Activated CD4-positive, alpha-beta memory T cell treated with anti-CD3 and anti-CD28 coated beads for 36 hours (primary cell): ENCODE measurements at regions of chr16 and their contacts with region 1.

Region 1: DNA sequence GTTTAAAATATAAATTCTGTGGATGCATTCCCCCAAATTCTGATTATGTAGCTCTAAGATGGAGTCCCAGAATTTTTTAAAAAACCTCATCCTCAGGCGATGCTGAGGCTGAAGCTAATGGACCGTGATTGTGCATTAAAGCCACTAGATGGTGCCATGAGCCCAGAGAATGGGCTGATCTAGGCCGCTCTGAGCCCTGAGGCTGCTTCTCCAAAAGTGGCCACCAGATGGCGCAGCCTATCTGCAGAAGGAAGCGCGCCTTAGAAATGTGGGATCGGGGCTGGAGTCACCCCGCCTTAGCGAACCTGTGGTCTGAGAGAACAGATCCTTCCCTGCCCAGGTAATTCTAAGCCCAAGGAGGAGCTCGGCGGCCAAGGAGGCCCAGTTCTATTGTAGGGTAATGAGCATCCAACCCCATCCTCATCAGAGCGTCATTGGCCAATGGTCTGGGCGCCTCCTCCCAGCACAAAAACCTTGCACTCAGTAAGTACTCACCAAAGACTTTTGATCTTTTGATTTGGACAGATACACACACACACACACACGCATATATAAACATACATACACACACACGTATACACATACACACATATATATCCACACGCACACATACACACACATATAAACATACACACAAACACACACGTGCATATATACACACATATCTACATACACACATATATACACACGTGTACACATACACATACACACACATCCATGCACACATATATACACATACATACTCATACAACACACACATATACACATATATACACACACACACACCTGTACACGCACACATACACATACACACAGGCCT is 13.7 kb upstream of the MMP2 start:
- DNase-seq: peak; percentile 86
- H3K4me3 Mint-ChIP-seq: no peak overlapping the region
- H3K27ac Mint-ChIP-seq: no peak overlapping the region
- H3K4me1 Mint-ChIP-seq: no peaks in the 10 kb centered on the region
- H3K27me3 Mint-ChIP-seq: peaks cover 3% of the 10 kb centered on the region

Region 2: GRCh38 chr16:55444754-55445485 is 20.4 kb before region 1 on chr16:
- CTCF ChIA-PET with region 1: interaction called, 15 read pairs
- POLR2A ChIA-PET with region 1: no interaction called
- intact Hi-C with region 1: no loop called
- DNase-seq: no peak
- H3K4me3 Mint-ChIP-seq: no peak overlapping the region
- H3K27ac Mint-ChIP-seq: no peak overlapping the region
- H3K4me1 Mint-ChIP-seq: no peaks in the 10 kb centered on the region
- H3K27me3 Mint-ChIP-seq: peaks cover 7% of the 10 kb centered on the region

Region 3: DNA sequence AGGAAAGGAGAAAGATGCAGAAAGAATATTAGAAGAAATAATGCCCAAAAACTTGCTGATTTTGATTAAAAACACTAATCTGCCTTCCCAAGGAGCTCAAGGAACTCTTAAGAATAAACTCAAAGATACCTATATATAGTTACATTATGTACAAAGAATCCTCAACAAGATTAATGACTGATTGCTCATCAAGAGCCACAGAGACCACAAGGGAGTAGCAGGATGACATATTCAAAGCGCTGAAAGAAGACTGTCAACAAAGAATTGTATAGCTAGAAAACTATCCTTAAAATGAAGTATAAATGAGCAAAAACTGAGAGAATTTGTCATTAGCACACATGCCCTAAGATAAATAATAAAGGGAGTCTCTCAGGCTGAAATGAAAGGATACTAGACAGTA is 49.8 kb after region 1 on chr16:
- CTCF ChIA-PET with region 1: interaction called, 10 read pairs
- POLR2A ChIA-PET with region 1: no interaction called
- intact Hi-C with region 1: no loop called
- DNase-seq: no peak
- H3K4me3 Mint-ChIP-seq: no peak overlapping the region
- H3K27ac Mint-ChIP-seq: no peak overlapping the region
- H3K4me1 Mint-ChIP-seq: no peaks in the 10 kb centered on the region
- H3K27me3 Mint-ChIP-seq: peaks cover 21% of the 10 kb centered on the region

Region 4: GRCh38 chr16:55543472-55543871 is 78.2 kb after region 1 on chr16:
- CTCF ChIA-PET with region 1: interaction called, 37 read pairs
- POLR2A ChIA-PET with region 1: no interaction called
- intact Hi-C with region 1: loop called (anchors 1 kb)
- DNase-seq: no peak
- H3K4me3 Mint-ChIP-seq: no peak overlapping the region
- H3K27ac Mint-ChIP-seq: no peak overlapping the region
- H3K4me1 Mint-ChIP-seq: no peaks in the 10 kb centered on the region
- H3K27me3 Mint-ChIP-seq: peaks cover 2% of the 10 kb centered on the region

Region 5: DNA sequence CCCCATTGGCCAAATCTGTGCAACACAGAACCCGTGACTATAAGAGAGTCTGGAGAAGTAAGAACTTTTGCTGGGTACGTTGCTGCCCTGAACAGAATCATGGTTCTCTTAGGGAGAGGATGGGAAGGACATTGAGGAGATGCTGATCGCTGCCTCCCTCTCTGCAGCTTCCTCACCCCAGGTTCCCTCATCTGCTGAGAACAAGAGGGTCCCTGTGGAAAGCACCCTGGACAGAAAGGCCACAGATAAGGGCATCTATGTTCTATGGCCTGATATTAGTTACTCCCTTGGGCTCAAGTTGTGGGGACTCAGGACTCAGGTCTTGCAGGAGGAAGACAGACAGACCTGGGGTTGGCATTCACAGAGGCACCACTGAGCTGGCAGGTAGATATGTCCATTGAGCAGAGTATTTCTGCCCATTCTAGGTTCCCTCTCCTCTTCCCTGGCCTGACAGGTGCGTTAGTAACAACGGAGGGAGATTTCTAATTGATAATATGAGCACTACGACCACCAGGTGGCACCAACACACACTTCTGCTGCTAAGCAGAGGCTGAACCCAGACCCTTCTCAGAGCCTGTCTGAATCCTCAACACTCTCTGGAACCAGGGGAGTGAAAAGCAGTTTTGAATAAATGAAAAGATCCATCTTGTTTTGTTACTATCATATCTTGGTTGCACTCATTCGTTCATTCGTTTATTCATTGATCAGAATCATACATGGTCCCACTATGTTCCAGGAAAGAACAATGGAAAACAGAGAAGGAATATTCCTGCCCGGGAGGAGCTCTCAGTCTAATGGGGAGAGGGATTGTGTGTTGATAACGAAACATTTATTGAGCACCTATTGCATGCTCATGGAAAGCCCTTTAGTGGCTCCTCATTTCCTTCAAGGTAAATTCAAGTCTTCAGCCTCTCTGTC is 246.9 kb after region 1 on chr16:
- CTCF ChIA-PET with region 1: interaction called, 238 read pairs
- POLR2A ChIA-PET with region 1: no interaction called
- intact Hi-C with region 1: no loop called
- DNase-seq: peak; percentile 65
- H3K4me3 Mint-ChIP-seq: no peak overlapping the region
- H3K27ac Mint-ChIP-seq: no peak overlapping the region
- H3K4me1 Mint-ChIP-seq: no peaks in the 10 kb centered on the region
- H3K27me3 Mint-ChIP-seq: peaks cover 15% of the 10 kb centered on the region

Region 6: GRCh38 chr16:55849536-55849935 is 384.2 kb after region 1 on chr16:
- CTCF ChIA-PET with region 1: interaction called, 22 read pairs
- POLR2A ChIA-PET with region 1: no interaction called
- intact Hi-C with region 1: no loop called
- DNase-seq: no peak
- H3K4me3 Mint-ChIP-seq: no peak overlapping the region
- H3K27ac Mint-ChIP-seq: no peak overlapping the region
- H3K4me1 Mint-ChIP-seq: no peaks in the 10 kb centered on the region
- H3K27me3 Mint-ChIP-seq: peaks cover 29% of the 10 kb centered on the region